ENCODE measurements at regions of chr14 and their contacts with region 1.

Region 1: DNA sequence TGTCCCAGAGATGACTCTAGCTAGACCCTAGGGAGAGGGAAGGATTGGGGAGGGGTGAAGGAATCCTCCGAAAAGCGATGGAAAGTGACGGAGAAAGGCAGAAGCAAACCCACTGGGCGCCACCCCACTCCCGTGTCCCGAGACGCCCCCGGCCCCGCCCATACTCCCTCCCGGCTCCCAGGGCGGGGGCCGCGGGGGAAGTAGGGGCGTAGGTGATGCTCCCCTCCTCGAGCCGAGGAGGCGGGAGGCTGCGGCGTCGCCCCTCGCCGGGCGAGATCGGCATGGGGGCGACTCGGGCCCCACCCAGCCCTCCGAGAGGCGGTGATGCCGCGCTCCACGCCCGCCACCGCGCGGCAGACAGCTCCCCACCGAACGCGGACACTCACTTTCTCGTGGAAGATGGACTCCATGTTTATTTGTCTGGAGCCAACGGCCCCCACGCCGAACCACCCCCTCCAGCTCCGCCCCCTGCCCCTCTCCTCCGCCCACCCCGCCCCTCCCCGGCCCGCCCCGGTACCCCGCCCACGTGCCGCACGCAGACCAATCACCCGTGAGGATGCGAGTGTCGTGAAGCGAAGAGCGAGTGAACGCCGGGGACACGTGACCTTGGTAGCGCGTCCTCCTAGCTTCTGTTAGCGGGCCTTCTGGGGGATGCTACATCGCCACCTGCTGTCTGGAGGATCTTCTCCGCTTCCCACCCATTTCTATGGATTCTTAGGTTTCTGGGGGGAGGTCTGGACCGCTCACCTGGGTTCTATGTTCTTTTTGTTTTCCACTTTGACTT is at the start of gene ATXN3:
- DNase-seq: peak; percentile 99
- total RNA-seq, gene ATXN3: 17.6 TPM

Region 2: GRCh38 chr14:92039719-92040430 is 66.5 kb before region 1 on chr14 and contains the start of gene TRIP11:
- intact Hi-C with region 1: loop called (anchors 1 kb)
- DNase-seq: peak; percentile 97
- total RNA-seq, gene TRIP11: 68.0 TPM